ENCODE measurements at regions of chr13 and their contacts with region 1.

Region 1: DNA sequence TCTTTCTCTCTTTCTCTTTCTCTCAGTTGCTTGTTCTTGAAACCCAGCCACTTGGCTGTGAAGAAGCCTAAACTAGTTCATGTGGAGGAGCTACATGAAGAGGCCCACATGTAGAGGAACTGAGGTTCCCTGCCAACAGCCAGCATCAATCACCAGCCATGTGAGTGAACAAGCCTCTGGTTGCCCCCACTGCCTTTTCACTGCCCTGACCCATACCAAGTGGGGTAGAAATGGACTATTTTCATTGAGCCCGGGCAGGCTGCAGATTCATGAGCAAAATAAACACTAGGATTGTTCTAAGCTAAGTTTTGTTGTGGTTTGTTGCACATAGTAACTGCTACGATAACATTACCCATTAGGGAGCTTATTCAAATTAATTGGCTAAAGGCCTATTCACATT is 78.7 kb upstream of the FAM216B start:
- DNase-seq: no peak

Region 2: DNA sequence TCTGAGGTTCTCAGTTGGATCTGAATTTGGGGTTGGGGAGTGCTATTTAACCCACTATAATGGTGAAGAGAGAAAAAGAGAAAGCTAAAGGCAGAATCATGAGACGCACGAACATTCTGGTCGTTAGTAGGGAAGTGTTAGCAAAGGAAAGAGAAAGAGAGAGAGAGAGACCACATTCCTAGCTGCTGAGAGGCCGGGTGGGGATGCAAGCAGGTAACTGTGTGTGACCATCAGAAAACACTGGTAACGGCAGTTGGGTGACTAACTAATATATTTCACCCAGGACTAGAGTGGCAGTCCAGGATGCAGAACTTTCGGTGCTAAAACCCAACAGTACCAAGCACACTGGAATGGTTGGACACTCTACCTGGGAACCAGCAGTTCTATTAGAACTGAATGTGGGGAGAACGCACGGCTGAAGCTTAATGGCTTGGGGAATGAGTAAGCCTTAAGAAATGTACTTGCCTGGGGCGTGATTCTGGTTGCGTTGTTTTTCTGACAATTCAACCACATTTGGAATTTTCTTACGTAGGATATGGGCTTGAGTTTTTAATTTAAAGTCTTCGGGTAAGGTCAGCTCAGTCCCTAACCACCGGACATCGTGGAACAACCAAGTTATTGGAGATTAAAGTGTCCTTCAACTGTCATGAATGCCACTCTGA is 450.9 kb after region 1 on chr13:
- intact Hi-C with region 1: loop called in 1 of 2 experiments (anchors 5 kb)
- DNase-seq: no peak

Measured in posterior vena cava (tissue), 2 donors.